Endothelial cell of umbilical vein (primary cell): ENCODE measurements at regions of chr9 and their contacts with region 1.

Region 1: GRCh38 chr9:69672596-69673310 is 582 bp upstream of the APBA1 start:
- DNase-seq: peak; percentile 83
- H3K4me3 ChIP-seq: peak overlapping the region; percentile 49 to 69 (median 64)
- H3K27ac ChIP-seq: peak overlapping the region; percentile 30
- H3K4me1 ChIP-seq: peaks cover 36% of the 10 kb centered on the region
- H3K27me3 ChIP-seq: peaks cover 17% of the 10 kb centered on the region in 2 experiments
- CTCF ChIP-seq: peak; percentile 91 to 94
- POLR2A ChIP-seq: no peak

Region 2: GRCh38 chr9:69549310-69550202 is 123.2 kb before region 1 on chr9:
- CTCF ChIA-PET with region 1: interaction called, 8 read pairs
- POLR2A ChIA-PET with region 1: no interaction called
- dilution Hi-C with region 1: no loop called
- intact Hi-C with region 1: loop called (anchors 5 kb)
- DNase-seq: peak; percentile 67
- H3K4me3 ChIP-seq: no peak overlapping the region
- H3K27ac ChIP-seq: no peak overlapping the region
- H3K4me1 ChIP-seq: no peaks in the 10 kb centered on the region
- H3K27me3 ChIP-seq: peaks cover 6 to 8% of the 10 kb centered on the region in 2 experiments
- CTCF ChIP-seq: peak; percentile 79 to 87
- POLR2A ChIP-seq: no peak

Region 3: DNA sequence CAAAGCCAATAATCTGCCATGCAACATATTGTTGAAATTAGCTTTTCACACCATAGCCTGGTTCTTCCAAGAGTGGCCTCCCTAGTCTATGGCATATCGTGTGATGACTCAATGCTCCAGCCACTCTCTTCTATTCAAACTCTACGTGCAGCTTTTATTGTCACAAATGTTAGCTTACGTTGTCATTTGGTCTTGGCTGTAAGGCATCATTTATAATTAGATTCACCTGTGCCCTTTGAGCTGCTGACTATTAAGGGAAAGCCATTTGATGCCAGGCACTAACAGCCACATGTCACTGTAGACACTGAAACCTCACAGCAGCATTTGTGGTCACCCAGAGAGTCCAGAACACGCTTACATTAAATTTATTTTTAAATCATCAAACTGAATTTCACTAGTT is 67.3 kb before region 1 on chr9:
- CTCF ChIA-PET with region 1: interaction called, 8 read pairs
- POLR2A ChIA-PET with region 1: no interaction called
- dilution Hi-C with region 1: no loop called
- intact Hi-C with region 1: loop called (anchors 1 kb)
- DNase-seq: no peak
- H3K4me3 ChIP-seq: no peak overlapping the region
- H3K27ac ChIP-seq: no peak overlapping the region
- H3K4me1 ChIP-seq: peaks cover 30% of the 10 kb centered on the region
- H3K27me3 ChIP-seq: no peaks in the 10 kb centered on the region
- CTCF ChIP-seq: no peak
- POLR2A ChIP-seq: no peak

Region 4: GRCh38 chr9:69759421-69760277 is 86.9 kb after region 1 on chr9 and contains the start of gene PTAR1:
- CTCF ChIA-PET with region 1: interaction called, 20 read pairs
- POLR2A ChIA-PET with region 1: no interaction called
- dilution Hi-C with region 1: no loop called
- intact Hi-C with region 1: loop called (anchors 1 kb)
- DNase-seq: peak; percentile 90
- H3K4me3 ChIP-seq: peak within 1 kb of the TSS; percentile 34 to 95 (median 91)
- H3K27ac ChIP-seq: peak within 1 kb of the TSS; percentile 64
- H3K4me1 ChIP-seq: peaks cover 15% of the 10 kb centered on the region
- H3K27me3 ChIP-seq: no peaks in the 10 kb centered on the region
- CTCF ChIP-seq: no peak
- POLR2A ChIP-seq: peak; percentile 85
- total RNA-seq, gene PTAR1: 41.5 and 46.8 TPM in 2 replicates

Region 5: DNA sequence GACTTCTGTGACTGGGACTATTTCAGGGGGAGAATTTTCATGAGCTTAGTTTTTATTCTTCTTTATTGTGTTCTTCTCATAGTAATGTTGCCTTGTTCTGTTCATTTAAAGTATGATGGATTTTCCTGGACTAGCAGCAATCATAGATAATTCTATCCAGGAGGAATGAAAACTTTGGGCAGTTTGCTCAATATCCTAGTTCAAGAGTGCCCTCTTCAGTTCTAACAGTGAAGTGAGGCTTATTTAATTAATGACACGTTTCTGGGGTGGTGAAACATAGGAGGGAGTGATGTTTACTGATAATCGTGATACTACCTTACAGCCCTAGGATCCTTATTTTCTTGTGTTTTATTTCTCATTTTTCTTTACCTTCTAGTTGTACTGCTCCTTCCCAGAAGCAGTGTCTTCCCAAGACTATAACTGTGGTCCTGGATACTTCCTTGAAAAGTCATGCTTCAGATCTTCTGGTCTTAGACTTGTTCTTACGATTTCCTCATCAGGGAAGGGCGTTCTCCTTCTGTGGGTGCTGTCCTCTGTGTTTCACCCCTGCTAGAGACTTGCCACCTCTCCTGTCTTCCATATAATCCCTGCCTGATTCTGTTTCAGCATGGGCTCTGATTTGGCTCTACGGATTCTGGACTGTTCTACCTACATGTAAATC is 205.2 kb after region 1 on chr9:
- CTCF ChIA-PET with region 1: interaction called, 6 read pairs
- POLR2A ChIA-PET with region 1: no interaction called
- dilution Hi-C with region 1: no loop called
- intact Hi-C with region 1: loop called (anchors 1 kb)
- DNase-seq: peak; percentile 53
- H3K4me3 ChIP-seq: no peak overlapping the region
- H3K27ac ChIP-seq: no peak overlapping the region
- H3K4me1 ChIP-seq: peaks cover 14% of the 10 kb centered on the region
- H3K27me3 ChIP-seq: peaks cover 3 to 9% of the 10 kb centered on the region in 2 experiments
- CTCF ChIP-seq: peak; percentile 27 to 30
- POLR2A ChIP-seq: no peak

Region 6: DNA sequence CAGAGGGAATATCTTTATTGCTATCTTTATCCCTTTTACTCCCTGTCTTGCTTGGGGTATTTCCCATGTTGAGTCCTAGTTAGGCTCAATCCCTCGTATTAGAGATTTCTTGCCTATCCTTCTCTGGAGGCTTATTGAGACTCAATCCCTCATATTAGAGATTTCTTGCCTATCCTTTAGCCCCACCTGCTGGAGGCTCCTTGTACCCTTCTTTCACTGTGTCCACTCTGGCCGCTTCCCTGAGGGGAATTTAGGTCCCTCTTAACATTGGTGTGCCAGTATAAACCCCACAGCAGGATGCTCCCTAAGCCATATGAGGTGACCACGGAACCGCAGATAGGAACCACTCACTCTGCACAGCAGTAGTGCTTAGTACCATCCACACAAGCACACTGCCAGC is 260.1 kb after region 1 on chr9:
- CTCF ChIA-PET with region 1: interaction called, 28 read pairs
- POLR2A ChIA-PET with region 1: no interaction called
- dilution Hi-C with region 1: no loop called
- intact Hi-C with region 1: loop called (anchors 1 kb)
- DNase-seq: peak; percentile 44
- H3K4me3 ChIP-seq: no peak overlapping the region
- H3K27ac ChIP-seq: no peak overlapping the region
- H3K4me1 ChIP-seq: no peaks in the 10 kb centered on the region
- H3K27me3 ChIP-seq: peaks cover 4% of the 10 kb centered on the region in 2 experiments
- CTCF ChIP-seq: peak; percentile 28 to 48
- POLR2A ChIP-seq: no peak

Region 7: DNA sequence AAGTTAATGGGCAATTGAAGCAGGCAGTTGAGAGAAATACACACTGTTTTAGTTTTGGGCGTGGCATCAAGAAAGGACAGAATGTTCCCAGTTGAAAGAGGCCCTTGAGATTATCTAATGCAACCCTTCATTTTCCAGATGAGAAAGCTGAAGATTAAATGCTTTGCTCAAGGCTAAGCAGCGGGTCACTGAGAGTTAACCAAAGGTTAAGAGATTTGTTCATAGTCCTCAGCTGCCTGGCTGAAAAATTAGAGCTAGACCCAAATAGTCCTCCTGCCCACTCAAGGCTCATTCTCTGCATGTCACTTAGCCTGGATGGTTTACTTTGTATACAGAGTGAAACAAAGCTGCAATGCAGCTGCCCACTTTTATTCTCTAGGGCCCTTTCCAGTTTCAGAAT is 324.2 kb after region 1 on chr9:
- CTCF ChIA-PET with region 1: no interaction called
- POLR2A ChIA-PET with region 1: no interaction called
- dilution Hi-C with region 1: no loop called
- intact Hi-C with region 1: no loop called
- DNase-seq: no peak
- H3K4me3 ChIP-seq: no peak overlapping the region
- H3K27ac ChIP-seq: no peak overlapping the region
- H3K4me1 ChIP-seq: no peaks in the 10 kb centered on the region
- H3K27me3 ChIP-seq: peaks cover 2 to 12% of the 10 kb centered on the region in 2 experiments
- CTCF ChIP-seq: no peak
- POLR2A ChIP-seq: no peak

Region 8: GRCh38 chr9:70413798-70414775 is 741.3 kb after region 1 on chr9 and contains the start of gene KLF9:
- CTCF ChIA-PET with region 1: no interaction called
- POLR2A ChIA-PET with region 1: no interaction called
- dilution Hi-C with region 1: no loop called
- intact Hi-C with region 1: loop called (anchors 10 kb)
- DNase-seq: peak; percentile 99
- H3K4me3 ChIP-seq: peak within 1 kb of the TSS; percentile 73 to 94 (median 91)
- H3K27ac ChIP-seq: peak within 1 kb of the TSS; percentile 84
- H3K4me1 ChIP-seq: peaks cover 33% of the 10 kb centered on the region
- H3K27me3 ChIP-seq: no peaks in the 10 kb centered on the region
- CTCF ChIP-seq: no peak
- POLR2A ChIP-seq: no peak
- total RNA-seq, gene KLF9: 17.2 and 23.1 TPM in 2 replicates